ENCODE measurements at regions of chr3 and their contacts with region 1.

Region 1: DNA sequence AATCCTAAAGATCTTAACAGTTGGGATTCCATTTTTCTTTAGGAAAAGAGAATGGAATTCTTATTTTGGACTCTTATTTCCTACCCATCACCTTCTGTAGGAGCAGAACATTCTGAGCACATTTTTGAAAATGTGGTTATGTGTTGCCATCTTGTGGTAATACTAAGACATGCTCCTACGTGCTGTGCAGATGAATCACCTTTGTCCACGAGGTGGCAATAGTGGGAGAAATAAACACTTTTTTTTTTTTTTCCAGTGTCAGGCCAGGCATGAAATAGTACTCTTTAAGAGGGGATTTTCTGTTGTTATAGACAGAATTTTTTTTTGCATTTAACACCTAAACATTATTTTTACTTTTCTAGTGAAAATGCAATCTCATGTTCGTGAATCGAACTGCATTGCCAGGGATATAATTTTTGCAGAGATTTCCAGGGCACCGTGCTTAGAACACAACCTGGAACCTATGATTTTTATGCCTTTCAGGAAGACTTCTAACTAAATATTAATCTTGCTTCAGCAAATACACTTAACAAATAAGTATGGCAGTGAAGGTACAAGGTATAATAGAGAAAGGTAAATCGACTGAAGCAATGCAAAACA is 196.6 kb downstream of the GAP43 start:
- H3K4me3 ChIP-seq: no peak overlapping the region
- H3K27ac ChIP-seq: no peak overlapping the region
- H3K4me1 ChIP-seq: no peaks in the 10 kb centered on the region
- CTCF ChIP-seq: peak; percentile 88

Region 2: DNA sequence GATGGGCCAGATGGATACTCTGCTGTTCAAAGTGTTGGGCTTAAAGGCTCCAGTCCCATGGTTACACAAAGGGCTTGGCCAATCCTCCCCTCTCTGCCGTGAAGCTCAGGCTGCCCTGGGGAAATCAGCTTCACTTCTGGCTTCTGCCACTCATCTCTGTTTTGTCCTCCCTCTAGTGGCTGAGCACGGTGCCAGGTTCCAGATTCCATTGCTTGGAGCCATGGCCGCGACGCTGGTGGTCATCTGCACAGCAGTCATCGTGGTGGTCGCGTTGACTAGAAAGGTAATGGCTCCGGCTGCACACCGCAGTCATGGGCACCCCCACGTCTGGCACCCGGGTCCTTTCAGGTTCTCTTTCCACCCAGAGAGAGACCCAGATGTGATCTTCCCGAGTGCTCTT is 1520.5 kb before region 1 on chr3:
- CTCF ChIA-PET with region 1: interaction called, 10 read pairs
- POLR2A ChIA-PET with region 1: no interaction called
- H3K4me3 ChIP-seq: no peak overlapping the region
- H3K27ac ChIP-seq: no peak overlapping the region
- H3K4me1 ChIP-seq: no peaks in the 10 kb centered on the region
- CTCF ChIP-seq: 0 out of 2 replicates have a peak, but pooled peaks have one; percentile 16

Region 3: DNA sequence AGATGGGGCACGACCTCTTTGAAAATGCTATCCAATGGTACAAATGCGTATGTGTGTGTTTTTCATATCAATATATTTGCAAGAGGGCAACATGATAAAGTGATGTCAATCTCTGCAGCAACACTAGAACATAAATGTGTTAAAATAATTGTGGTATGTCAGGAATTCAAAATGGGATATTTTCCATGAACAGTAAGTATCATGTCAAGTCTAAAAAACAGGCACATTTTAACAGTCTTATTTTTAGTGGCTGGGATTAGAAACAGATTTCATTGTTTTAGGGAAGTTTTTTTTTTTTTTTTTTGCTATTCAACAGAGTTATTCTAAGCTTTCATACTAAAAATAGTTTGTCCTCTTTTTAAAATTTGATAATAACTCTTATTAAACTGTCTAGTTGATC is 13.2 kb after region 1 on chr3:
- CTCF ChIA-PET with region 1: interaction called, 18 read pairs
- POLR2A ChIA-PET with region 1: no interaction called
- H3K4me3 ChIP-seq: no peak overlapping the region
- H3K27ac ChIP-seq: no peak overlapping the region
- H3K4me1 ChIP-seq: no peaks in the 10 kb centered on the region
- CTCF ChIP-seq: no peak